ENCODE measurements at regions of chr2 and their contacts with region 1.

Region 1: DNA sequence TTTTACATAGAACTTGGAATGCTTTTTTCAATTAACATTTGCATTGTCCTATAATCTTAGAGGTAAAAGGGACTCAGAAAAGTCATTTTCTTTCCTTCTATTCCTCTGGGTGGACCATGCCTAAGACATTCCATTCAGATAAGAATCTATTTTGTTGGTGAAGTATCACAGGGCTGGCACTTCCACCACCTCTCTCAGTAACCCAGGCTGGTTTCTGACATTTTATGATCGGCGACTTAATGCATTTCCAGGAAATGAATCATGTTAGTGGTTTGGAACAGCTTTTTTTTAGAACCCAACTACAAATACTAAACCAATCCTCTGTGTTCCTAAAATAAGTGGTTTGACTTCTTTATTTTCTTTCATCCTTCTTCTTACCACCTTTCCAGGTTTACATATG is 27.0 kb downstream of the GAD1 start:
- DNase-seq: peak; percentile 58 to 83 (median 68)
- H3K4me3 ChIP-seq: no peak overlapping the region
- H3K27ac ChIP-seq: no peak overlapping the region
- H3K4me1 ChIP-seq: peaks cover 4 to 16% (median 11%) of the 10 kb centered on the region in 4 experiments
- H3K27me3 ChIP-seq: no peaks in the 10 kb centered on the region

Region 2: DNA sequence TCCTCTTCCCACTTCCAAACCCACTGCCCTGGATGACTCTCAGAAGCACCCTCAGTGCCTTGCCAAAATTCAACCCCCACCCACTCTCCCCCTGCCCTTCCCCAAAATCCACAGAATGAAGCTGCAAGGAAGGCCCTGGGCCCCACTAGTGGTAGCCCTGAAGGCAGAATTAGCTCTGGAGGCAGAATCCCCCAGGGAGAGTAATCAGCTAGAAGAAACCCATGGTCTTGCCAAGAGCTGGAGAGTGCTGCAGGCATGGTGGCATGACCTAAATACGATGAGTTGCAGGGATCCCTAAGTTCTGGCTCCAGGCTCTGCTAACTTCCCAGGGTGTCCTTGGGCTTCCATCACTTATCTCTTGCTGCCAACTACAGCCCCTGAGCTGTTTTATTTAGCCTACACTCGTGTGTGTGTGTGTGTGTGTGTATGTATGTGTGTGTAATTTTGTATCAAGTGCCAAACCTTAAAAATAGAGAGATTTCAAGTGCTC is 19.1 kb before region 1 on chr2:
- CTCF ChIA-PET with region 1: interaction called, 23 read pairs
- POLR2A ChIA-PET with region 1: no interaction called
- DNase-seq: no peak
- H3K4me3 ChIP-seq: no peak overlapping the region
- H3K27ac ChIP-seq: no peak overlapping the region
- H3K4me1 ChIP-seq: peaks cover 0 to 42% (median 38%) of the 10 kb centered on the region in 4 experiments
- H3K27me3 ChIP-seq: peaks cover 0 to 92% (median 39%) of the 10 kb centered on the region in 5 experiments

Region 3: DNA sequence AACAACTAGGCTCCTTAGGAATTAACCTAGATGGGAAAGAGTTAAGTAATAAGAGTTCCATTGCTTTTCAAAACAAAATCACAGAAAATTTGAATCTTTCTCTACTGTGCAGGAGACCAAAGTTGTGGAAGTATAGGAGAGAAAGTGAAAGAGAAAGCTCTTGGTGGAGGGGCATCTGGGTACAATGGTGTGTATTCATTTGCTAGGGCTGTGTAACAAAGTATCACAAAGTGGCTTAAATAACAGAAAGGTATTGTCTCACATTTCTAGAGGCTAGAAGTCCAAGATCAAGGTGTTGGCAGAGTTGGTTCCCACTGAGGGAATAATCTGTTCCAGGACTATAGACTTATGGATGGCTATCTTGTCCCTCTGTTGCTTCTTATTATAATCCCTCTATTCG is 34.8 kb after region 1 on chr2:
- CTCF ChIA-PET with region 1: no interaction called
- POLR2A ChIA-PET with region 1: no interaction called
- DNase-seq: peak in 2 of 3 donors; percentile 54 to 64
- H3K4me3 ChIP-seq: peak overlapping the region in 3 of 7 experiments; percentile 24 to 56 (median 30)
- H3K27ac ChIP-seq: no peak overlapping the region
- H3K4me1 ChIP-seq: peaks cover 0 to 6% (median 0%) of the 10 kb centered on the region in 4 experiments
- H3K27me3 ChIP-seq: no peaks in the 10 kb centered on the region

Region 4: DNA sequence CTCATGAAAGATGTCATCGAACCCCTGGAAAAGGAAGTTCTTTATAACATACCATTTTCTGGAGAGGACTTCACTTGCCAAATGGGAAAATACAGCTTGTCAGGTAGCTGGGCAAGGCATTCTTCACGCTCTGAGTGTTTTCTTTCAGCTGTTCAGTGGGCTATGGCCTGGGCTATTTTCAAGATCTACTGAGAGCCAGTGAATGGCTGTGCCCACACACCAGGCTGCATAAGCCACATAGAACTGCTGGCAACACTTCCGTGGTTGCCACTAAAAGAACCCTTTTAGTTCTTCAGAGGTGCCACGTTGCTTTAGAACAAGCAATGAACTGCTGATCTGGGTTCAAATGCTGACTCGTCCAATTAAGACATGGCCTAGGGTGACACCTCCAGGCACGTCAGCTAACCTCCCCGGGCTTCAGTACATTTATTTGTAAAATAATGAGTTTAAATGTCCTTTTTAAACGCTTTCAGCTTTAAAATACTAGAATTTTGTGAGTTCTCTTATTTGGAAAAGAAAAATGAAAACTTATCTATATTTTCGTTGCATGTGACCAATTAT is 48.8 kb after region 1 on chr2:
- CTCF ChIA-PET with region 1: no interaction called
- POLR2A ChIA-PET with region 1: no interaction called
- DNase-seq: no peak
- H3K4me3 ChIP-seq: no peak overlapping the region
- H3K27ac ChIP-seq: no peak overlapping the region
- H3K4me1 ChIP-seq: no peaks in the 10 kb centered on the region
- H3K27me3 ChIP-seq: no peaks in the 10 kb centered on the region

Measured in common myeloid progenitor, CD34-positive (primary cell).